Activated CD4-positive, alpha-beta memory T cell treated with anti-CD3 and anti-CD28 coated beads for 36 hours (primary cell): ENCODE measurements at regions of chr6 and their contacts with region 1.

Region 1: GRCh38 chr6:158999666-159000403 is at the start of gene RSPH3:
- DNase-seq: peak; percentile 97
- H3K4me3 Mint-ChIP-seq: peak within 1 kb of the TSS; percentile 97
- H3K27ac Mint-ChIP-seq: peak within 1 kb of the TSS; percentile 86
- H3K4me1 Mint-ChIP-seq: peaks cover 34% of the 10 kb centered on the region
- H3K27me3 Mint-ChIP-seq: no peaks in the 10 kb centered on the region
- total RNA-seq, gene RSPH3: 6.1 to 6.8 TPM

Region 2: GRCh38 chr6:158649289-158650143 is 350.3 kb before region 1 on chr6 and contains the start of gene SYTL3:
- CTCF ChIA-PET with region 1: no interaction called
- POLR2A ChIA-PET with region 1: no interaction called
- intact Hi-C with region 1: no loop called
- DNase-seq: peak; percentile 93
- H3K4me3 Mint-ChIP-seq: peak within 1 kb of the TSS; percentile 79
- H3K27ac Mint-ChIP-seq: peak within 1 kb of the TSS; percentile 99
- H3K4me1 Mint-ChIP-seq: peaks cover 77% of the 10 kb centered on the region
- H3K27me3 Mint-ChIP-seq: no peaks in the 10 kb centered on the region
- total RNA-seq, gene SYTL3: 181 to 186 TPM

Region 3: GRCh38 chr6:158729914-158730907 is 269.6 kb before region 1 on chr6:
- CTCF ChIA-PET with region 1: no interaction called
- POLR2A ChIA-PET with region 1: no interaction called
- intact Hi-C with region 1: no loop called
- DNase-seq: no peak
- H3K4me3 Mint-ChIP-seq: no peak overlapping the region
- H3K27ac Mint-ChIP-seq: no peak overlapping the region
- H3K4me1 Mint-ChIP-seq: no peaks in the 10 kb centered on the region
- H3K27me3 Mint-ChIP-seq: no peaks in the 10 kb centered on the region

Region 4: DNA sequence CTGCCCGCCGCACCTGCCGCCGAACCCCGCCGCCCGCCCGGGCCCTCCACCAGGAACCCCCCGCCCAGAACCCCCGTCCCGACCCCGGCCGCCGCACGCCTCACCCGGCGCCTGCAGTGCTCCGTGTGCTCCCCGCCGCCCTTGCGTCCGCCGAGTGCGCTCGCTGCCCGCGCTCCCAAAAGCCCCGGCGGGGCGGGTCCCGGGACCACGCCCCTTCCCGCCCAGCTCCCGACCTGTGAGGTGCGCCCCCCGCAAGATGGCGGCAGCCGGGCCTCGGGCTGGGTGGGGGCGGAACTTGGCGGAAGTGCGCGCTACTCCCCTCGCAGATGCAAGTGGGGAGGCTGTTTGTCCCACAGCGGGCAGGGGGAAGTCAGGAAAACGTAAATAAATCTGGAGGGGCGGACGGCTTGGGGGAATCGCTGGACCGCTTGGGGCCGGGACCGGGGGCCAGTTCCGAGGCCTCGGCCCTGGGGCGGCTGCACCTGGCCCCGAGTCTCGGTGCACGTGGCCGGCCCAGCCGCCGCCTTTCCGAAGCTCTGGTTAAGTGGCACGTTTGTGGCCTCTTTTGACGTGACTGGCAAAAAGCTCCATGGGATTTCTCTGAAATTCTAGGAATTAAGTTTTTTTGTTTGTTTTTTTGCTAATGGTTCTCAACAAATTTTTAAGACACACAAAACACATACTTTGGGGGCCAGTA is 180.5 kb before region 1 on chr6 and contains the start of gene EZR:
- CTCF ChIA-PET with region 1: no interaction called
- POLR2A ChIA-PET with region 1: interaction called, 4 read pairs
- intact Hi-C with region 1: loop called (anchors 2 kb)
- DNase-seq: peak; percentile 91
- H3K4me3 Mint-ChIP-seq: peak within 1 kb of the TSS; percentile 100
- H3K27ac Mint-ChIP-seq: peak within 1 kb of the TSS; percentile 99
- H3K4me1 Mint-ChIP-seq: peaks cover 43% of the 10 kb centered on the region
- H3K27me3 Mint-ChIP-seq: no peaks in the 10 kb centered on the region
- total RNA-seq, gene EZR: 255 to 256 TPM

Region 5: DNA sequence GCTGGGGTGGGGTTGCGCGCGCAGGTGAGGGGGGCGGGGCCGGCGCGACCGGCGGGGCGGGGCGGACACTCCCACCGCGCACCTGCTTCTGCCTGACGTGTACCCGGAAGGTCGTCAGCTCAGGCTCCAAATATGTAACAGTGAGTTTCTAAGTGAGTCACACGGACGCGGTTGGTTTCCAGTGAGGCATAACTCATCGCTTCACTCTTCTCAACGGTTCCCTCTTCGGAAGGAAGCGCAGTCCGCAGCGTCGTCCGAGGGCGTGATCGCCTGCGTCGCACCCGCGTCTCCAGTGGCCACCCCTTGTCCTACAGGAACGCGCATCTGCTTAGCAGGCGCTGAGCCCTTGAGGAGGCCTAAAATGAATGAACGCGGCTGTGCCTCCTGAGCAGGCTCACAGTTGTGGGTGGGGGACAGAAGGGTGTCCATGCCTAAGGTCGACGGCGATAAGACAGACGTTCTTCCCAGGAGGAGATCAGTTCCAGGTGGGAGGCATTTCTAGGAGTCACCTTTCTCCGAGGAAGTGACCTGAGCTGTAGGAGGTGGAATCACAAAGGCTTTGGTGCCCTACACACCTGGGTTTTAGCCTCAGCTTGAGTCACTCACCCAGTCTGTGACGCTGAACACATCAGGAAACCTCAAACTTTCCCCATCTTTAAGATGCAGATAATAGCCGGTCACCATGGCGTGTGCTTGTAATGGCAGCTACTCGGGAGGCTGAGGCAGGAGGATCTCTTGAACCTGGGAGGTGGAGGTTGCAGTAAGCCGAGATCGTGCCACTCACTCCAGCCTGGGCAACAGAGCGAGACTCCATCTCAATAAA is 129.8 kb before region 1 on chr6:
- CTCF ChIA-PET with region 1: no interaction called
- POLR2A ChIA-PET with region 1: interaction called, 9 read pairs
- intact Hi-C with region 1: loop called (anchors 5 kb)
- DNase-seq: peak; percentile 97
- H3K4me3 Mint-ChIP-seq: peak overlapping the region; percentile 82
- H3K27ac Mint-ChIP-seq: peak overlapping the region; percentile 98
- H3K4me1 Mint-ChIP-seq: peaks cover 34% of the 10 kb centered on the region
- H3K27me3 Mint-ChIP-seq: peaks cover 1% of the 10 kb centered on the region

Region 6: GRCh38 chr6:159017757-159018559 is 18.1 kb after region 1 on chr6:
- CTCF ChIA-PET with region 1: interaction called, 9 read pairs
- POLR2A ChIA-PET with region 1: interaction called, 4 read pairs
- intact Hi-C with region 1: loop called (anchors 1 kb)
- DNase-seq: no peak
- H3K4me3 Mint-ChIP-seq: no peak overlapping the region
- H3K27ac Mint-ChIP-seq: peak overlapping the region; percentile 79
- H3K4me1 Mint-ChIP-seq: peaks cover 55% of the 10 kb centered on the region
- H3K27me3 Mint-ChIP-seq: no peaks in the 10 kb centered on the region

Region 7: DNA sequence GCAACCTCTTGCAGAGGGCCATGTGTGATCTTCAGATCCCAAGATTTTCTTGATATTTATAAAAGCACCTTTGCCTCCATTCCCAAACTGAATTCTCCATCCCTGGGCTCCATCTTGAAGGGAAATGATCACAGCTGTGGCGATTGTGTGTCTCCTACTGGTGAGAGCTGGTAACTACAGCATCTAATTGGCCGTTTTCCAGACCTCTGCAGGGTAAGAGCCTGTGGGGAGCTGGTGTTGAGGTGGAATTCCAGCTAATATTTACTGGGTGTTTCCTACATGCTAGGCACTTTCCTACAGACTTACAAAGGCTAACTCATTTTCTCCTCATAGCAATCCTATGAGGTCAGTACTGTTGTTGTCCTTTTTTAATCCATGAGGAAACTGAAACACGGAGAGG is 110.2 kb after region 1 on chr6:
- CTCF ChIA-PET with region 1: interaction called, 498 read pairs
- POLR2A ChIA-PET with region 1: interaction called, 6 read pairs
- intact Hi-C with region 1: no loop called
- DNase-seq: peak; percentile 62
- H3K4me3 Mint-ChIP-seq: no peak overlapping the region
- H3K27ac Mint-ChIP-seq: peak overlapping the region; percentile 19
- H3K4me1 Mint-ChIP-seq: peaks cover 52% of the 10 kb centered on the region
- H3K27me3 Mint-ChIP-seq: no peaks in the 10 kb centered on the region

Region 8: GRCh38 chr6:159134701-159135364 is 135.0 kb after region 1 on chr6:
- CTCF ChIA-PET with region 1: interaction called, 248 read pairs
- POLR2A ChIA-PET with region 1: no interaction called
- intact Hi-C with region 1: no loop called
- DNase-seq: peak; percentile 85
- H3K4me3 Mint-ChIP-seq: no peak overlapping the region
- H3K27ac Mint-ChIP-seq: no peak overlapping the region
- H3K4me1 Mint-ChIP-seq: no peaks in the 10 kb centered on the region
- H3K27me3 Mint-ChIP-seq: peaks cover 7% of the 10 kb centered on the region